CD4-positive, alpha-beta memory T cell (primary cell): ENCODE measurements at regions of chr3 and their contacts with region 1.

Region 1: GRCh38 chr3:136390574-136390973 is 140.4 kb downstream of the PCCB start:
- DNase-seq: no peak
- H3K4me3 ChIP-seq: no peak overlapping the region
- H3K4me3 Mint-ChIP-seq: no peak overlapping the region
- H3K27ac ChIP-seq: no peak overlapping the region
- H3K27ac Mint-ChIP-seq: no peak overlapping the region
- H3K4me1 ChIP-seq: no peaks in the 10 kb centered on the region
- H3K4me1 Mint-ChIP-seq: peaks cover 0 to 2% (median 0%) of the 10 kb centered on the region in 4 donors
- H3K27me3 ChIP-seq: no peaks in the 10 kb centered on the region
- H3K27me3 Mint-ChIP-seq: no peaks in the 10 kb centered on the region

Region 2: DNA sequence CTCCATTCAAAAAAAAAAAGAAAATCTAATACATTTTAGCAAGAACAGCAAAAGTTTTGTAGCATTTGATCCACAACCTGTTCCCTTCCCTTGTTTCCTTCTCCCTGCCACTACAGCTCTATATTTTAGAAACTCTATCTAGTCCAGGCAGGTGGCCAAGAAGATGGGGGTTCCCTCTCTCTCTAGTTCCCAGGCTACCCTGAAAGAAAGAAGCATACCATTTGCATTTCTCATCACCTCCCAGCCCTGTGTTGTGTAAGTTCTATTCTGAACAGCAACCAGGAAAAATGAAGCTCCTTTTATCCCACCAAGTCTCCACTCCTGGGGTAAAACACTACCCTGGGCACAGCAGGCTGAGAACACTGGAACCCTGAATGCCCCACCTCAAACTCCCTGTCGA is 40.4 kb before region 1 on chr3:
- CTCF ChIA-PET with region 1: interaction called, 12 read pairs
- POLR2A ChIA-PET with region 1: no interaction called
- intact Hi-C with region 1: no loop called
- DNase-seq: no peak
- H3K4me3 ChIP-seq: no peak overlapping the region
- H3K4me3 Mint-ChIP-seq: no peak overlapping the region
- H3K27ac ChIP-seq: no peak overlapping the region
- H3K27ac Mint-ChIP-seq: peak overlapping the region in 2 of 7 donors; percentile 41 to 52
- H3K4me1 ChIP-seq: peaks cover 5% of the 10 kb centered on the region
- H3K4me1 Mint-ChIP-seq: peaks cover 0 to 9% (median 5%) of the 10 kb centered on the region in 4 donors
- H3K27me3 ChIP-seq: no peaks in the 10 kb centered on the region
- H3K27me3 Mint-ChIP-seq: no peaks in the 10 kb centered on the region